ENCODE measurements at regions of chr11 and their contacts with region 1.

Region 1: DNA sequence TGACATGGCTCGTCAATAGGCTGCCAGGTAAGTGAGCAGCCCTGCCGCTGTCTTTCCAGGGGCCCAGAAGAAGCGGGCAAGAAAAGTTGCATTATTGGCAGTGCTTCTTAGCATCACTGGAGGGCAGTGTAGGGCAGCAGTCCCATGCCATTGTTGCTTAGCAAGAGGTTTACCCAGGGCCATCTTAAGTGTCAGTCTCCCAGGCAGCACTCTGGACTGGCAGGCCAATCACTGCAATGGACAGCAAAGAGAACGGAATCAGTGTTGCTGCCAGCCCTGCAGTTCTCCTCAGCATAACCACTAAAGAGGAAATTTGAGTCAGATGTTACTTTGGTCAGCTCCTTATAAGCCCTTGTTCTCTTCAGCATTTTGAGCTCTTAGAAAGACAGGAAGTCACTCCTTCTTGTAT is 13.4 kb upstream of the GRK2 start:
- DNase-seq: peak; percentile 55
- ATAC-seq: peak; percentile 41
- H3K4me3 ChIP-seq: no peak overlapping the region
- H3K4me3 Mint-ChIP-seq: no peak overlapping the region
- H3K27ac ChIP-seq: no peak overlapping the region
- H3K27ac Mint-ChIP-seq: peak overlapping the region; percentile 67
- H3K4me1 ChIP-seq: no peaks in the 10 kb centered on the region
- H3K4me1 Mint-ChIP-seq: peaks cover 7% of the 10 kb centered on the region
- H3K27me3 ChIP-seq: no peaks in the 10 kb centered on the region
- H3K27me3 Mint-ChIP-seq: no peaks in the 10 kb centered on the region
- CTCF ChIP-seq: peak; percentile 57

Region 2: GRCh38 chr11:67158221-67158620 is 94.6 kb before region 1 on chr11:
- CTCF ChIA-PET with region 1: no interaction called
- POLR2A ChIA-PET with region 1: interaction called, 10 read pairs
- intact Hi-C with region 1: no loop called
- DNase-seq: no peak
- ATAC-seq: no peak
- H3K4me3 ChIP-seq: no peak overlapping the region
- H3K4me3 Mint-ChIP-seq: no peak overlapping the region
- H3K27ac ChIP-seq: no peak overlapping the region
- H3K27ac Mint-ChIP-seq: no peak overlapping the region
- H3K4me1 ChIP-seq: no peaks in the 10 kb centered on the region
- H3K4me1 Mint-ChIP-seq: peaks cover 24% of the 10 kb centered on the region
- H3K27me3 ChIP-seq: no peaks in the 10 kb centered on the region
- H3K27me3 Mint-ChIP-seq: no peaks in the 10 kb centered on the region
- CTCF ChIP-seq: no peak

Region 3: GRCh38 chr11:67213178-67213621 is 39.6 kb before region 1 on chr11:
- CTCF ChIA-PET with region 1: no interaction called
- POLR2A ChIA-PET with region 1: no interaction called
- intact Hi-C with region 1: no loop called
- DNase-seq: peak; percentile 70
- ATAC-seq: peak; percentile 94
- H3K4me3 ChIP-seq: no peak overlapping the region
- H3K4me3 Mint-ChIP-seq: peak overlapping the region; percentile 60
- H3K27ac ChIP-seq: no peak overlapping the region
- H3K27ac Mint-ChIP-seq: peak overlapping the region; percentile 47
- H3K4me1 ChIP-seq: peaks cover 18 to 20% of the 10 kb centered on the region in 2 donors
- H3K4me1 Mint-ChIP-seq: peaks cover 16% of the 10 kb centered on the region
- H3K27me3 ChIP-seq: no peaks in the 10 kb centered on the region
- H3K27me3 Mint-ChIP-seq: no peaks in the 10 kb centered on the region
- CTCF ChIP-seq: no peak

Region 4: GRCh38 chr11:67271541-67272284 is 18.9 kb after region 1 on chr11:
- CTCF ChIA-PET with region 1: interaction called, 4 read pairs
- POLR2A ChIA-PET with region 1: interaction called, 13 read pairs
- intact Hi-C with region 1: no loop called
- DNase-seq: peak; percentile 65
- ATAC-seq: peak; percentile 29
- H3K4me3 ChIP-seq: peak overlapping the region in 4 of 5 experiments; percentile 0 to 89 (median 82)
- H3K4me3 Mint-ChIP-seq: peak overlapping the region; percentile 98
- H3K27ac ChIP-seq: peak overlapping the region; percentile 73 to 82
- H3K27ac Mint-ChIP-seq: peak overlapping the region; percentile 98
- H3K4me1 ChIP-seq: peaks cover 91 to 93% of the 10 kb centered on the region in 2 donors
- H3K4me1 Mint-ChIP-seq: peaks cover 92% of the 10 kb centered on the region
- H3K27me3 ChIP-seq: no peaks in the 10 kb centered on the region
- H3K27me3 Mint-ChIP-seq: no peaks in the 10 kb centered on the region
- CTCF ChIP-seq: no peak

Region 5: DNA sequence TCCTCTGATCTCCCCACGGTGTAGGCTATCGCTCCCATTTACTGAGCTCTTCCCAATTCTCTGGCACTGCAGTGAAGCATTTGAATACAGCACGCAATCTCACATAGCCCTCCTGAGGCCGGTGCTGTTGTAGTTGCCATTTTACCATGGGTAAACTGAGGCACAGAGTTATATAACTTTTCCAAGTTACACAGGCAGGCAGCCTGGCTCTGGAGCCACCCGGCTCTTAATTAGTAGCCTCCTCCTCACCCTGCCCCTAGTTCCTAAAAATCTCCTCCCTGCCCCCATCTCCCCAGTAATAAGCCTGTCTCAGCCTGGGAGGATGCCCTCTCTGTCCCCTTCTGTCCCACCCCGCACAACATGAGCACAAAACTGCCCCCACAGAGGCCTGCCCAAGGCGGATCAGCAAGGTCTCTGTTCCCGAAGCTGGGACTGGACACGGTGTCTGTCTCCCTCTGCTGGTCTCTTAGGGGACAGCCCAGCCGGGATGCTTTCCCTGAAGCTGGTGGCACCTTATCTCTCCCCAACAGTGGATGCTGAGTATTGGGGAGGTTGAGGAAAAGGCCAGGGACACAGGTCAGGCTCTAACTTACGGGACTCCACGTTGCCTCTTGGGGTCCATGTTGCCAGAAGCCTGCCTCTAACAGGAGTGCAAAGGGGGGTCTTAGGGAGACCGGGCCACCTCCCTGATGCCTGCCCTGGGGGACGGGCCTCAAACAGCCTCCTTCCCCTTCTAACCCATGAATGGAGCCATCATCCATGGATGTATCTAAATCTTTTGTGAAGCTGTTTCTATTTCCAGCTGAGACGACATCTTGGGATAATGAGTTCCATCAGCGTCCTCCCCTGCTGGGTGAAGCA is 129.7 kb after region 1 on chr11:
- CTCF ChIA-PET with region 1: interaction called, 17 read pairs
- POLR2A ChIA-PET with region 1: no interaction called
- intact Hi-C with region 1: no loop called
- DNase-seq: peak; percentile 88
- ATAC-seq: peak; percentile 86
- H3K4me3 ChIP-seq: no peak overlapping the region
- H3K4me3 Mint-ChIP-seq: peak overlapping the region; percentile 84
- H3K27ac ChIP-seq: peak overlapping the region in 1 of 2 donors; percentile 88
- H3K27ac Mint-ChIP-seq: peak overlapping the region; percentile 92
- H3K4me1 ChIP-seq: peaks cover 22 to 33% of the 10 kb centered on the region in 2 donors
- H3K4me1 Mint-ChIP-seq: peaks cover 22% of the 10 kb centered on the region
- H3K27me3 ChIP-seq: no peaks in the 10 kb centered on the region
- H3K27me3 Mint-ChIP-seq: no peaks in the 10 kb centered on the region
- CTCF ChIP-seq: peak; percentile 96

Measured in B cell (primary cell).